WTC11 (cell line): ENCODE measurements at regions of chr4 and their contacts with region 1.

Region 1: DNA sequence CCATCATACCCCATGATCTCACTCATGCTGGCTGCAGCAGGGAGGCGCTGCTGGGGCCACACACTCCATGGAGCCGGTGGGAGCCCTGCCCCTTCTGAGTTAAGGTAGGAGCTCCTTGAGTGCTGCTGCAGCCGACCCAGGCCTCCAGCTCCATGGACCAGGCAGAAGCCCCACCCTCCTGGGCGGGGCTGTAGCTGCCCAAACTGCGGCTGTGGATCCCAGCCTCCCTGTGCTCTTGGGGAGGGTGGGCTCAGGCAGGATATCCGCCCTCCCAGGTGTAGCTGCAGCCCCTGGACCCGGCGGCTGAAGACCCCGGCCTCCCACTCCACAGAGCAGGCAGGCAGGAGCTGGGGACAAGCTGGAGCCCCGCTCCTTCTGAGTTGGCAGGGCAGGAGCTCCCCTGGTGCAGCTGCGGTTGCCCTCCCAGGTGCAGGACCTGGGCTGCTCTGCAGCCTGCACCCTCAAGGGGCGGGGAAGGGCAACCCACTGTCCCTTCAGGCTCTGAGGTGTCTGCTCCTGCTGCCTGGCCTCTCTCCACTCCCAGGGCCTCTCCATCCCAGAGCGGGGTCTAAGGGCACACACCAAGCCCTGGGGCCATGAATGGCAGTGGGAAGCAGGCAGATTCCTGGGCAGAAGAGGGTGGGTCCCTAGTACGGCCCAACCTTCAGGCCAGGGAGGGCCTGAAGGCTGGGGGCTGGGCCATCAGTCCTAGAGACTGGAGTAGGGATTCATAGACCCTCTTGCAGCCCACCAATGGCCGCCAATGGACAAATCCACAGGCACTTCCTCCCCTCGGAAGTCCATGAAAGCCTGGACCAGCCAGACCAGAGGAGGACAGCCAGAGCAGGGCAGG is 466.1 kb downstream of the DTHD1 start:
- DNase-seq: peak; percentile 69
- ATAC-seq: peak; percentile 100
- H3K4me3 Mint-ChIP-seq: no peak overlapping the region
- H3K27ac Mint-ChIP-seq: no peak overlapping the region
- H3K4me1 Mint-ChIP-seq: peaks cover 8% of the 10 kb centered on the region
- H3K27me3 Mint-ChIP-seq: no peaks in the 10 kb centered on the region
- CTCF ChIP-seq: no peak

Region 2: GRCh38 chr4:36722986-36723385 is 24.5 kb before region 1 on chr4:
- CTCF ChIA-PET with region 1: interaction called, 10 read pairs
- POLR2A ChIA-PET with region 1: no interaction called
- DNase-seq: no peak
- ATAC-seq: no peak
- H3K4me3 Mint-ChIP-seq: no peak overlapping the region
- H3K27ac Mint-ChIP-seq: no peak overlapping the region
- H3K4me1 Mint-ChIP-seq: no peaks in the 10 kb centered on the region
- H3K27me3 Mint-ChIP-seq: no peaks in the 10 kb centered on the region
- CTCF ChIP-seq: no peak

Region 3: DNA sequence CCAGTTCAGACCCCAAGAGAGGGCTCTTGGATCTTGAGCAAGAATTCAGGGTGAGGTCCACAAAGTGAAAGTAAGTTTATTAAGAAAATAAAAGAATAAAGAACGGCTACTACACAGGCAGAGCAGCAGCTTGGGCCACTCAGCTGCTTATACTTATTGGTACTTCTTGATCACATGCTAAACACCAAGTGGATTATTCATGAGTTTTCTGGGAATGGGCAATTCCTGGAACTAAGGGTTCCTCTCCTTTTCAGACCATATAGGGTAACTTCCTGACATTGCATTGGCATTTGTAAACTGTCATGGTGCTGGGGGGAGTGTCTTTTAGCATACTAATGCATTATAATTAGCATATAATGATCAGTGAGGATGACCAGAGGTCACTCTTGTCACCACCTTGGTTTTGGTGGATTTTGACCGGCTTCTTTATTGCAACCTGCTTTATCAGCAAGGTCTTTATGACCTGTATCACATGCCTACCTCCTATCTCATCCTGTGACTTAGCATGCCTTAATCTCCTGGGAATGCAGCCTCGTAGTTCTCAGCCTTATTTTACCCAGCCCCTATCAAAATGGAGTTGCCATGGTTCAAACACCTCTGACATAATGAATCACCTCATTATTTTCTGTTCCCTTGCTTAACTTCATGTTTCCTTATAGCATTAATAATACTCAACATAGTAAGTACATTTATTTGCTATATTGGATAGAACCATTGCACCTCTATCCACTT is 10.2 kb after region 1 on chr4:
- CTCF ChIA-PET with region 1: interaction called, 12 read pairs
- POLR2A ChIA-PET with region 1: no interaction called
- DNase-seq: no peak
- ATAC-seq: peak; percentile 38
- H3K4me3 Mint-ChIP-seq: no peak overlapping the region; the same call in 1 of the 2 replicates
- H3K27ac Mint-ChIP-seq: peak overlapping the region; percentile 82; the same call in 1 of the 2 replicates
- H3K4me1 Mint-ChIP-seq: peaks cover 59% of the 10 kb centered on the region
- H3K27me3 Mint-ChIP-seq: peaks cover 58% of the 10 kb centered on the region
- CTCF ChIP-seq: no peak